AG04450 (cell line): ENCODE measurements at regions of chr1 and their contacts with region 1.

Region 1: DNA sequence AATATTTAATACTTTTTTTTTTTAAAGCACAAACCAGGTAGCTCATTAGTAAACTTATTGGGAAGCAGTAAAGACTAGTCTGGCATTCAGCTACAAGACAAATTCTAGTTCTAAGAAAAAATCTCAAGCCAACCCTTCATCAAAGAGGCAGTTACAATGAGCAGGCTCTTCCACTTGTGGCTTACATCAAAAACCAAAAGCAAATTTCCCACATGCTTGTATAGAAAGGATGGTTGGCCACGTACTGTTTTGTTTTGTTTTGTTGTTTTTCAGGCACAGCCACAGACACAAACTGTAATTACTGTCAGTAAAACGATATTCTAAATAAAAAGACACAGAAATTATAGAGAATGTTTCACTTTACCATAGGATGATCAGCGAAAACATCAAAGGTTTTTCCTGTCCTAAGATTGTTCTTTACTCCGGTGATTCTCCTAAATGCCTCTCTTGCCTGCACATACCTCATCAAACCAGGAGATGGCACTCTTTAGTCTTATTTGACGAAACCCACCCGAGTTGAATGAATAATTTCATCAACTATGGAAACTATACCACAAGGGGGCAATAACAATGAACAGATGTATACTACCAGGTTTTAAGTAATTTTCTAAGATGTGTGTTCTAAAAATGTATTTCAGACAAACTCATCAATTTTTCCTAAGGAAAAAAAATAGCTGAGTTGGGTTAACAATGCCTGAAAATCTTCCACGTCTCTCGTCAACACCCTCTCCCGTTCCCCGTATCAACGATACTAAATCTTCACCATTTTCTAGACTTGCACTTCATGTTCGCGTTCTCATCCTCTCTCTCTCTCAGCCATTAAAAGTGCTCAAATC is 26.9 kb downstream of the RPL5 start:
- DNase-seq: peak; percentile 62
- H3K4me3 ChIP-seq: no peak overlapping the region
- H3K27ac ChIP-seq: no peak overlapping the region
- H3K27me3 ChIP-seq: no peaks in the 10 kb centered on the region
- CTCF ChIP-seq: peak; percentile 92

Region 2: DNA sequence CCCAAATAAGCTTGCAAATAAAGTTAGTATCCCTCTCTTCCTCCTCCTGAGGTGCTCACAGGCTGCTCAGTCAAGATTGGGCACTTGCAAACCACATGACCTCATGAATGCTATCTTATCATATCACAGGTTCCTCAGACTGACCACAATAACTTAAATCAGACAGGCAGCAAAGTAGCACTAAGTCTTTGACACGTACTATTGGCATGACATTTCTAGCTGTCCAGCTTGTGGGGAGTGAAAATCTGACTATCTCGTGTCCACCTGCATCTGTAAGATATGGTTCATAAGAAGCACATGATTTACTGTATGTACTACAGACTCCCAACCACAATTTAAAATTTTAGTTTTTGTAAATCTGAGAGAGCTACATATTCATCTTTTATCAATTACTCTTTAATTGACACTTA is 314.0 kb before region 1 on chr1:
- CTCF ChIA-PET with region 1: no interaction called
- POLR2A ChIA-PET with region 1: no interaction called
- DNase-seq: no peak
- H3K4me3 ChIP-seq: no peak overlapping the region
- H3K27ac ChIP-seq: no peak overlapping the region
- H3K27me3 ChIP-seq: no peaks in the 10 kb centered on the region
- CTCF ChIP-seq: no peak

Region 3: DNA sequence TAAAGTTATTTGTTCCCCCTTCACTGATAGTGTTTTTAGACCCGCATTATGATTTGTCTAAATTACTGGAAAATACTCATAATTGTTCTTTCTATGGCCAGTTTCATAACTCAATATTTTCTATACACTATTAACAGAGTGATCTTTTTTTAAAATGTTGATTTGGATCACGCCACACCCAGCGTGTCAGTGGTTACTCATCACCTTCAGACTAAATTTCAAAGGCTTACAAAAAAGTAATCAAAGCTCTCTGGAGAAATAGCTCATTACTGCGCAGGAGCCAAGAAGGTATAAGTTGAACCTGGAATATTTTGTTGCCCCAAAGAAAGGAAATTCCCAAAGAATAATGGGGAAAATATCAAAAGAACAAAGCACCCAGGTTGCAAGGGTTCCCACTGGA is 178.8 kb before region 1 on chr1:
- CTCF ChIA-PET with region 1: no interaction called
- POLR2A ChIA-PET with region 1: no interaction called
- DNase-seq: no peak
- H3K4me3 ChIP-seq: no peak overlapping the region
- H3K27ac ChIP-seq: no peak overlapping the region
- H3K27me3 ChIP-seq: no peaks in the 10 kb centered on the region
- CTCF ChIP-seq: no peak

Region 4: DNA sequence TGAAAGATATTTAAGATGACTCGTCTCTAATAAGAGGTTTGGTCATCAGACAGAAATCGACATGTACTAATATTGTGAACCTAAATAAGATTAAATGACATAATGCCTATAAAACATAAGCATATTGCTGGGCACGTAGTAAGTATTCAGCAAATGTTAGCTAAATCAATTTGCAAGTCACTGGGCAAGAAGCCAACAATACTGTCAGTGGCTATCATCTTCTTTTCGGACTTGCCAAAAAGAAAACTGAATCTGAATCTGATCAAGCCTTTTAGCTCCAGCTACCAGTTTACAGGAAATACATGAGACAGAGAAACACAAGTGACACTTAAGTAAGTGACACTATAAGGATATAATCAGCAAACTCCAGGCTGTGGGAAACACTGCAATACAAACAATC is 19.0 kb after region 1 on chr1:
- CTCF ChIA-PET with region 1: interaction called, 37 read pairs
- POLR2A ChIA-PET with region 1: no interaction called
- DNase-seq: no peak
- H3K4me3 ChIP-seq: no peak overlapping the region
- H3K27ac ChIP-seq: no peak overlapping the region
- H3K27me3 ChIP-seq: no peaks in the 10 kb centered on the region
- CTCF ChIP-seq: no peak

Region 5: GRCh38 chr1:92944901-92945747 is 86.3 kb after region 1 on chr1:
- CTCF ChIA-PET with region 1: interaction called, 10 read pairs
- POLR2A ChIA-PET with region 1: no interaction called
- DNase-seq: no peak
- H3K4me3 ChIP-seq: no peak overlapping the region
- H3K27ac ChIP-seq: no peak overlapping the region
- H3K27me3 ChIP-seq: no peaks in the 10 kb centered on the region
- CTCF ChIP-seq: no peak

Region 6: GRCh38 chr1:92980732-92981647 is 122.2 kb after region 1 on chr1:
- CTCF ChIA-PET with region 1: interaction called, 14 read pairs
- POLR2A ChIA-PET with region 1: no interaction called
- DNase-seq: no peak
- H3K4me3 ChIP-seq: no peak overlapping the region
- H3K27ac ChIP-seq: no peak overlapping the region
- H3K27me3 ChIP-seq: peaks cover 3% of the 10 kb centered on the region
- CTCF ChIP-seq: no peak

Region 7: DNA sequence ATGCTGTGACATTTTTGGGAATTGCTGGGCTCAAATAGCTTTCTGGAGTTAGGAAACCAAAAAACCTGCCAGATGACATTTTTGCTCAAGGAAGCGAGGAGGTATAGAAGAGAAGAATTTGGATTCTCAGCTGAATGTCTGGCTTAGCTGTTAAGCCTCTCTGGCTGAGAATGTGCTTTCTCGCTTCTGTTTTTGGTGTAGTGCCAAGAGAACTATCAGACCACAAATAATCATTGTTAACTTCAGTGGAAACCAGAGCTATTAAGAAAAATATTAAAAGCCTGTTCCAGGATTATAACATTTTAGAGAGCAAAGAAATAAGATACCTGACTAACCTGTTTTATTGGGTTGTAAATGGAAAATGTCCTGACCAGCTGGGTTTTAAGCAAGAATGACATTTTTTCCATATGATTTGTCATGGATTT is 142.0 kb after region 1 on chr1:
- CTCF ChIA-PET with region 1: interaction called, 43 read pairs
- POLR2A ChIA-PET with region 1: no interaction called
- DNase-seq: no peak
- H3K4me3 ChIP-seq: no peak overlapping the region
- H3K27ac ChIP-seq: no peak overlapping the region
- H3K27me3 ChIP-seq: peaks cover 27% of the 10 kb centered on the region
- CTCF ChIP-seq: no peak

Region 8: DNA sequence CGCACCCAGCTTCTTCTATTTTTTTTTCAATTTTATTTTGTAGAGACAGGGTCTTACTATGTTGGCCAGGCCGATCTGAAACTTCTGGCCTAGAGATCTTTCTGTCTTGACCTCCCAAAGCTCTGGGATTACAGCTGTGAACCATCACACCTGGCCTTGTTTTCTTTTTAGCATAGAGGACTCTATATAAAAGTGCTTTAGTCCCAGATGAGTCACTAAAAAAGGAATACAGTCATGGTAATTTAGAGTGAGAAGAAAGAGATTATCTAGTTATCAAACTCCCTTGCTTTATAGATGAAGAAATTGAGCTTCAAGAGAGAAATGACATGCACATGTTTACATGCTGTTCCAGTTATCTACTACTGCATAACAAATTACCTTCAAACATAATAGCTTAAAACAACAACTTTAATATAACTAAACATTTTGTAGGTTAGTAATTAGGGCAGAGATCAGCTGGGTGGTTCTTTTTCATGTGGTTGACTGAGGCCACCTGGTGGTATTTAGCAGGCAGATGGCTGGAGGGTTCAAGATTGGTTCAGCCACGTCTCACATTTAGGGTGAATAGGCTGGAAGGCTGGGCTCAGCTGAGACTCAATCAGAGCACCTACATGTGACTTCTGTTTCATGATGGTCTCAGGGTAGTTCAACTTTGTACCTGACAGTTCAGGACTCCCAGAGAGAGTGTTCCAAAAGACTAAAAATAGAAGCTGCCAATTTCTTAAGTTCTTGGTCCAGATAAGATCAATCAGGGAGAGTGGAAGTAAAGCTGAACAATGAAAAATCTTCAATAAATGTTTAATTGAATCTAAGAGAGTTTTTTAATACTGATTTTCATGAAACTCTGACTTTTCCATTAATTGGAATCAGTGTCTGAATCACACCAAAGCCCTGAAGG is 203.4 kb after region 1 on chr1:
- CTCF ChIA-PET with region 1: interaction called, 20 read pairs
- POLR2A ChIA-PET with region 1: no interaction called
- DNase-seq: no peak
- H3K4me3 ChIP-seq: no peak overlapping the region
- H3K27ac ChIP-seq: no peak overlapping the region
- H3K27me3 ChIP-seq: peaks cover 16% of the 10 kb centered on the region
- CTCF ChIP-seq: peak; percentile 47